Pancreas (tissue), 10 donors: ENCODE measurements at regions of chr3 and their contacts with region 1.

Region 1: DNA sequence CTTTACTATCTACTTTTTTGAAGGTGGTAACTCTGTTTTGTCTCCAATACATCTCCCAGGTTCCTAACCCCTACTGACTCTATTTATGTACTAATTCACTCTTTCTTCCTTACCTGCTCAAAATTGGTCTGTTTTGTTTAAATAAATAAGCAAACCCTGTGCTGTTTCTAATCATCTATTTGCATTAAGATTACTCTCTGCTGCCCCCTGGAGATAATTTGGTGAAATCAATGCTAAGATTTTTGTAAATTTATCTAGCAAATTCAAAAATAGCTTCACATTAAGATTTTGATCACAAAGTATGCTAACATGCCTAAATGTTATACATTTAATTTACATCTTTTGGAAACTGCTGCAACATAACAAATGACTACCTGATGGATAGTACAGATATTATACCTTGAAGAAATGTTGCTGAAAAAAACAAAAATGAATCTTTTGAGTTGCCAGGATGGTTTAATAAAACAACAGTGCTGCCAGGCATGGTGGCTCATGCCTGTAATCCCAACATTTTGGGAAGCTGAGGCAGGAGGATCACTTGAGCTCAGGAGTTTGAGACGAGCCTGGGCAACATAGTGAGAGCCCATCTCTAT is 4.4 kb upstream of the CD200R1 start:
- DNase-seq: no peak
- ATAC-seq: peak in 3 of 4 donors; percentile 40 to 62 (median 48)
- H3K4me3 ChIP-seq: no peak overlapping the region
- H3K27ac ChIP-seq: no peak overlapping the region
- H3K4me1 ChIP-seq: peaks cover 0 to 4% (median 0%) of the 10 kb centered on the region in 3 donors
- H3K27me3 ChIP-seq: no peaks in the 10 kb centered on the region
- CTCF ChIP-seq: peak; percentile 16 to 64 (median 46)

Region 2: DNA sequence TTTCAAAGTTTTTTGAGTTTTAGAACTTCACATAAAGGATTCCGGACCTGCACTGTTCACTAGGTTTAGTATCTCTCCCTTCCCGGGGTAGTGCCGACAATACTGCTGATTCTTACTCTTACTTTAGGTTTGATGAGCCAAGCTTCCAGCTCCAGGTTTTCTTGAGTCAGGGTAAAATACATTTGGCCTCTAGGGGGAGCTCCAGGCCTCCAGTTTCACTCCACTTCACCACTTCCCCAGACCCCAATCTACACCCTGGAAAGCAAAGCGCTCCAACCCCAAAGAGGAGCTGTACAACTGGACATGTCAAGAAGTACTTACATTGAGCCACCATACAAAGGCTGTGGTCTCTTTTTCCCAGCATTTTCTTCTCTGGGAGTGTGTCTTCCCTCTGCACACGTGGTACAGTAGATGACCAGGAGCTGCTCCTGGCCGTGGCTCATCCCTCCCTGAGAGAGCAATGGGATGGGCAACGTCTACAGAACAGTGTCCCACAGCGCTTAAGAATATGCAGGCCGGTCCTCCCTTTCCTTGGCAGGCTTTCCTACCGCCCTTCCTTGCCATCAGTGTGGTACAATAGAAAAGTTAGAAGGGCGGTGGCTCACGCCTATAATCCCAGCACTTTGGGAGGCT is 244.5 kb before region 1 on chr3:
- intact Hi-C with region 1: loop called in 1 of 3 experiments (anchors 5 kb)
- DNase-seq: peak in 5 of 6 donors; percentile 14 to 47 (median 24)
- ATAC-seq: peak in 3 of 4 donors; percentile 77 to 83 (median 82)
- H3K4me3 ChIP-seq: no peak overlapping the region
- H3K27ac ChIP-seq: no peak overlapping the region
- H3K4me1 ChIP-seq: no peaks in the 10 kb centered on the region
- H3K27me3 ChIP-seq: no peaks in the 10 kb centered on the region
- CTCF ChIP-seq: peak; percentile 26 to 64 (median 58)